Activated CD4-positive, alpha-beta memory T cell treated with anti-CD3 and anti-CD28 coated beads for 36 hours (primary cell): ENCODE measurements at regions of chr15 and their contacts with region 1.

Region 1: DNA sequence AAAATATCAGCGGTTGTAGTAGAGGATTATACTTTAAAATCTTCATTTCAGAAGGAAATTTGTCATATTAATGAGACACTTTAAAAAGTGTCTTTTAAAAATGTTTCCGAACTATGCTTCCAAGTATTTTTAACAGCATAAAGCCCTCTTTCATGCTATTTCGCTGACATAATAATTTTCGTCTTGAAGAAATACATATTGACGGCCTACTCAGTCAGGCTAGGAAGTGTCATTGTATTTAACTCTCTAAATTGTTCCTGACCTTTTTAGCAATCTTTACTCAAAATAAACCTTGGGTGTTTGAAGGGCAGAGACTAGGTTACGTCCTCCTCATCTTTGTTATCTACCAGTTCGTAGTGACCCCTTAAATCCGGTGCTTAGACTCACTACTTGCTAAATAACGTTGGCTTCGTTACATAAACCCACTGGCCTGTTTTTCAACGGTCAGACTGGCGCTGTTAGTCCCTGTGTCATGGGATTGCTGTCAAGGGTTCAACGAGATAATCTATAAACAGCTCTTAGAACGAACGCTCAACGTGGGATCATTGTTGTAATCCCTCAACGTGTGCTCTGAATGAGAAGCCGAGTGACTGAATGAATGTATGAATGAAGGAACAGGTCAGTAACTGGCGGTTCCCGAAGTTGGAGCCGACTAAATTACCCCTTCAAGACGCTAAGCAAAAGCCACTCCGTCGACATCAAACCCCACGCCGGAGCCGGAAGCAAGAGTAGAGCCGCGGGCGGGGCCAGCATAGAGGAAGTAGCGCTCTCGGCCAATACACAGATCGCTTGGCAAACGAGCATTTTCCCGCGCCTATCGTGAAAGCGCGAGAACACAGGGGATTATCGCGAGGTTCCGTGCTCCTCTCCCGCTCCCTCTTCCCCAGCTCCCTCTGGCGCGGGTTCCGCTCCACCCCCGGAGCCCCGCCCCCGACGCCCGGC is 516 bp upstream of the LRRC28 start:
- DNase-seq: peak; percentile 99
- H3K4me3 Mint-ChIP-seq: peak overlapping the region; percentile 88
- H3K27ac Mint-ChIP-seq: peak overlapping the region; percentile 84
- H3K4me1 Mint-ChIP-seq: peaks cover 28% of the 10 kb centered on the region
- H3K27me3 Mint-ChIP-seq: no peaks in the 10 kb centered on the region

Region 2: GRCh38 chr15:99275525-99276128 is 24.9 kb after region 1 on chr15:
- CTCF ChIA-PET with region 1: interaction called, 19 read pairs
- POLR2A ChIA-PET with region 1: no interaction called
- intact Hi-C with region 1: no loop called
- DNase-seq: no peak
- H3K4me3 Mint-ChIP-seq: no peak overlapping the region
- H3K27ac Mint-ChIP-seq: no peak overlapping the region
- H3K4me1 Mint-ChIP-seq: peaks cover 24% of the 10 kb centered on the region
- H3K27me3 Mint-ChIP-seq: no peaks in the 10 kb centered on the region

Region 3: GRCh38 chr15:99733268-99734039 is 482.7 kb after region 1 on chr15 and contains the start of gene LYSMD4:
- CTCF ChIA-PET with region 1: no interaction called
- POLR2A ChIA-PET with region 1: interaction called, 5 read pairs
- intact Hi-C with region 1: loop called (anchors 1 kb)
- DNase-seq: peak; percentile 99
- H3K4me3 Mint-ChIP-seq: peak within 1 kb of the TSS; percentile 75
- H3K27ac Mint-ChIP-seq: peak within 1 kb of the TSS; percentile 92
- H3K4me1 Mint-ChIP-seq: peaks cover 11% of the 10 kb centered on the region
- H3K27me3 Mint-ChIP-seq: no peaks in the 10 kb centered on the region
- total RNA-seq, gene LYSMD4: 5.2 to 7.6 TPM

Region 4: DNA sequence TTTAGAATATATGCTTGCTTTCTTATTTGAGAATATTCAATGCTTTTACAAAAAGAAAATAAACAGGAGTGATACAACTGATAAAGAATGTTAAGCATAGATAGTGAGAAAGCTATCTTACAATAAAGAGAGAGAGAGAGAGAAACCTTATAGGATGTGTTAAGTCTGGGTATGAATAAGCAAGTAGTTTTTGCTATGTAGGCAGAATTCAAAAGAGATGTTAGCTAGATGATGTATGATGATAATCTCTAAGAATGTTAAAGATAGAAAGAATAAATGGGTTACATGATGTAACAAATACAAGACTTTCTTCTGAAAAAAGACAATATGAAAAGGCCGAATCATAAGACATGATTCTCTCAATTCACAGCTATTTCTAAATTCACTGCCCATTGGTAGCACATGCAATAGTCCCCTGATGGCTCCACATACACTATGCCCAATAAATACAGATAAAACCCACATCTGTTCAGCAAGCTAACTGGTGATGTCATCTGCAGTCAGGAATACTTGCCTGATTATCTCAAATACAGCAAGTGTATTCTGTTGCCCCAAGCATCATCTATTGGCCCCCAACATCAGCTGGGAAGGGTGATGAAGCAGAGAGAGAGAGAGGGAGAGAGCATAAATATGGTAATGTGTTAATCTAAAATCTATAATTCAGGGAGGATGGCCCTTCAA is 651.6 kb after region 1 on chr15:
- CTCF ChIA-PET with region 1: no interaction called
- POLR2A ChIA-PET with region 1: no interaction called
- intact Hi-C with region 1: loop called (anchors 2 kb)
- DNase-seq: no peak
- H3K4me3 Mint-ChIP-seq: no peak overlapping the region
- H3K27ac Mint-ChIP-seq: no peak overlapping the region
- H3K4me1 Mint-ChIP-seq: peaks cover 5% of the 10 kb centered on the region
- H3K27me3 Mint-ChIP-seq: no peaks in the 10 kb centered on the region